GM12878 (cell line): ENCODE measurements at regions of chr13 and their contacts with region 1.

Region 1: DNA sequence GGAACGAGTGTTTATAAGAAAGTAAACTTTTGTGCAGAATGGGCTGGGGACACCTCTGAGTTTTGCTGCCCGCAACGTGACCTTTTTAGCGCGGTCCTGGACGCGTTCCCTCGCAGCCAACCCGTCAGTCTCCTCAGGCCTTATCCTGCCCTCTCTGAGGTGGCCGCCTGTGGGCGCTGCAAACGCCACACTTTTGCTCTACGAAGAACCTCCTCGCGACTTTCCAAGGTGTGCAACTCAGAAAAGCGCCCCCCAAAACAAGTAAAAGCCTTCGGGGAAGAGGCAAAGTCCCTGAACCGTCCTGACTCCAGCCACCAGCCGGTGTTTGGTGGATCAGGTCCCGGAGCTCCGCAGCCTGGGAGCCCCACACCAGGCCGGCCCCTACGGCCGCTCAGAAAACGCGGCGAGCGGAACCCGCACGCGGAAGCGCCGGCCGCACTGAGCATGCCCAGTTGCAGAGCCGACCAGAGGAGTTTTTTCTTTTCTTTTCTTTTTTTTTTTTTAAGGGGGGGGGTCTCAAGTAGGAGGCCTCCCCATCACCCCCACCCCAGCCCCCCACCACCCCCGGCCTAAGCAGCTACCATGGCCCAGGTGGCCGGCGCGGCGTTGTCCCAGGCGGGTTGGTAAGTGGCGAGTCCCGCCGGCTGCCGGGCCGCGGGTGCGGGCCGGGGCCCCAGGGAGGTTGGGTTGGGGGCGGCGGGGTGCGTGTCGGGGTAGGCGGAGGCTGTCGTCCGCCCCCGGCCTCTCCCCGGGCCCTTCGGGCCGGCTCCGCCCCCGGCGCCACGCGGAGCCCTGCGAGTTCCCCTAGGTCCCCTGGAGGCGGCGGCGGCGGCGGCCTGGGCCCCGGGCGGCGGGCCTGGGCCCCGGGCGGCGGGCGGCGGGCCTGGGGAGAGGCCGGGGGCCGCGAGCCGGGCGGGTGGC is at the start of gene TDRD3:
- DNase-seq: peak; percentile 59
- ATAC-seq: peak; percentile 81
- H3K4me3 ChIP-seq: peak within 1 kb of the TSS; percentile 96
- H3K27ac ChIP-seq: peak within 1 kb of the TSS; percentile 96
- H3K4me1 ChIP-seq: peaks cover 18% of the 10 kb centered on the region
- H3K27me3 ChIP-seq: no peaks in the 10 kb centered on the region
- CTCF ChIP-seq: peak; percentile 77 to 94 (median 89)
- EP300 ChIP-seq: 0 out of 4 replicates have a peak, but pooled peaks of 1 of the 2 experiments have one; percentile 12
- POLR2A ChIP-seq: peak; percentile 63
- RAD21 ChIP-seq: peak; percentile 52
- polyA plus RNA-seq, gene TDRD3: 8.4 to 9.5 TPM

Region 2: GRCh38 chr13:60163478-60164233 is 233.4 kb before region 1 on chr13 and contains the start of gene DIAPH3:
- CTCF ChIA-PET with region 1: no interaction called
- POLR2A ChIA-PET with region 1: no interaction called
- RAD21 ChIA-PET with region 1: no interaction called
- SMC1A ChIA-PET with region 1: no interaction called
- in situ Hi-C with region 1: no loop called
- intact Hi-C with region 1: loop called (anchors 5 kb)
- DNase-seq: peak; percentile 76
- ATAC-seq: peak; percentile 99
- H3K4me3 ChIP-seq: peak within 1 kb of the TSS; percentile 80
- H3K27ac ChIP-seq: peak within 1 kb of the TSS; percentile 86
- H3K4me1 ChIP-seq: no peaks in the 10 kb centered on the region
- H3K27me3 ChIP-seq: no peaks in the 10 kb centered on the region
- CTCF ChIP-seq: no peak
- EP300 ChIP-seq: no peak
- POLR2A ChIP-seq: peak; percentile 97
- RAD21 ChIP-seq: no peak
- polyA plus RNA-seq, gene DIAPH3: 10.1 to 13.0 TPM

Region 3: DNA sequence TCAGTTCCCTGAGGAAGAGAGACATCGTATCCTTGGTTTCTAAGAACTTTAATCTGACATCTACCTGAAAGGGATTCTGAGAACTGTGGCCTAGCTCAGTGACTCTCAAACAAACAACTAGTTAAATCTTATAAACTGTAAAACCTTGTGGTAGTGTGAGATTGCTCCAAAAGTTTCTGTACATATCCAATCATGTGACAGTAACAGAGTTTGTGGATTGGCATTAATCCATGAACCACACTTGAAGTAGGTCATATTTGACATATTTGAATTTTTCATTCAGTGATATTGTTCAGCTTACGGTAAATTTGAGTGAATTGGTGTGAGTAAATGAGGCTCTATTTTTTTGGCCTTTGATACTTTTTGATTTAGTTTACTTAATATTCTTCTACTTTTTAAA is 14.9 kb after region 1 on chr13:
- CTCF ChIA-PET with region 1: interaction called, 7 read pairs
- POLR2A ChIA-PET with region 1: interaction called, 4 read pairs
- RAD21 ChIA-PET with region 1: interaction called, 25 read pairs
- SMC1A ChIA-PET with region 1: interaction called, 15 read pairs
- in situ Hi-C with region 1: no loop called
- intact Hi-C with region 1: no loop called
- DNase-seq: no peak
- ATAC-seq: no peak
- H3K4me3 ChIP-seq: no peak overlapping the region
- H3K27ac ChIP-seq: no peak overlapping the region
- H3K4me1 ChIP-seq: no peaks in the 10 kb centered on the region
- H3K27me3 ChIP-seq: no peaks in the 10 kb centered on the region
- CTCF ChIP-seq: no peak
- EP300 ChIP-seq: no peak
- POLR2A ChIP-seq: no peak
- RAD21 ChIP-seq: no peak